Mammary epithelial cell (primary cell): ENCODE measurements at regions of chr4 and their contacts with region 1.

Region 1: GRCh38 chr4:46931981-46932380 is 22.9 kb upstream of the COX7B2 start:
- DNase-seq: peak; percentile 1
- H3K4me3 ChIP-seq: no peak overlapping the region
- H3K27ac ChIP-seq: no peak overlapping the region
- H3K4me1 ChIP-seq: no peaks in the 10 kb centered on the region
- H3K27me3 ChIP-seq: peaks cover 2% of the 10 kb centered on the region
- CTCF ChIP-seq: peak; percentile 26 to 66

Region 2: DNA sequence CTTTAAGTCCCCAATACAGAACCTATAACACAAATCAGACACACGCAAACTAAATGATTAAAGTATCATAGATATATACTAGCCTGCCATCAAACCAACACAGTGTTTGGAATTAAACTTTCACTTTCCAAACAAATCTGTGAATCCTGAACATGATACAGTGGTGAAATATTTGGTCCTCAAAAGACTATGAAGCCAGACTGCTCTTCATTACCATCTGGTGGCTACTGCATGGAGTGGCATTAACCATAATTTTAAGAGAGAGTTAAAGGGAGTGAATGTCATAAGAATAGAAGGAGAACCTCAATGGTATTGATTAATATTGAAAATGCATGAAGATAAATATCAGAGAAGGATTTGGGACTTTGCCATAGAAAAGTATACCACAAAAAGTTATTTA is 70.6 kb after region 1 on chr4:
- CTCF ChIA-PET with region 1: no interaction called
- dilution Hi-C with region 1: no loop called
- in situ Hi-C with region 1: no loop called
- intact Hi-C with region 1: loop called (anchors 2 kb)
- DNase-seq: peak; percentile 1
- H3K4me3 ChIP-seq: no peak overlapping the region
- H3K27ac ChIP-seq: no peak overlapping the region
- H3K4me1 ChIP-seq: no peaks in the 10 kb centered on the region
- H3K27me3 ChIP-seq: no peaks in the 10 kb centered on the region
- CTCF ChIP-seq: peak; percentile 22 to 50

Region 3: GRCh38 chr4:47032415-47033106 is 100.6 kb after region 1 on chr4:
- CTCF ChIA-PET with region 1: no interaction called
- dilution Hi-C with region 1: no loop called
- in situ Hi-C with region 1: no loop called
- intact Hi-C with region 1: loop called (anchors 1 kb)
- DNase-seq: peak; percentile 14
- H3K4me3 ChIP-seq: peak overlapping the region; percentile 23 to 53 (median 52)
- H3K27ac ChIP-seq: no peak overlapping the region
- H3K4me1 ChIP-seq: peaks cover 16% of the 10 kb centered on the region
- H3K27me3 ChIP-seq: peaks cover 4% of the 10 kb centered on the region
- CTCF ChIP-seq: peak; percentile 40 to 70

Region 4: GRCh38 chr4:47106561-47106960 is 174.6 kb after region 1 on chr4:
- CTCF ChIA-PET with region 1: no interaction called
- dilution Hi-C with region 1: no loop called
- in situ Hi-C with region 1: loop called in 1 of 2 experiments (anchors 10 kb)
- intact Hi-C with region 1: no loop called
- DNase-seq: no peak
- H3K4me3 ChIP-seq: no peak overlapping the region
- H3K27ac ChIP-seq: no peak overlapping the region
- H3K4me1 ChIP-seq: no peaks in the 10 kb centered on the region
- H3K27me3 ChIP-seq: no peaks in the 10 kb centered on the region
- CTCF ChIP-seq: no peak

Region 5: DNA sequence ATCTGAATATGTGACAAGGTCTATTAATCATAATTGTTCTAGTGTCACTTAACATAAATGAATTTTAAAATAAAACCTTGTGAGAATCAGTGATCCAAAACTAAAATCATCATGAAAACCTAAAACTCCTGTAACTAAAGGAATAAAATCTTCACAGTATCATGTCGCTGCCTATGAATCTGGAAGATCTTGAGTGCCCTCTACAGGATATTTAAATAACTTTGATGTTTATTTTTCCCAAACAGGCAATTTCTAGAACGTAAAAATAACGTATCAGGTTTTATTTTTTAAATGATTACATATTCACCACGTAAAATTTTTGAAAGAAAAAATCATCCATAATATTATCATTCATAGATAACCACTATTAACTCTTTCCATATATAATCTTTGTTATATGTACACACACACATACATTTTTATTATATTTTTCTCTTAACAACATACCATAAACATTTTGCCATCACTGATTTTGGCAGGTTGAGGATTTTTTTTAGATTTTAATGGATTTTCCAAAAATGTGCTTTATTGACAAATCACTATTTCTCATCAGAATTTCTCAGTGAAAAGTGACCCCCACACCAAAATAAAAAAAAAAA is 451.9 kb after region 1 on chr4:
- CTCF ChIA-PET with region 1: no interaction called
- dilution Hi-C with region 1: no loop called
- in situ Hi-C with region 1: loop called in 1 of 2 experiments (anchors 10 kb)
- intact Hi-C with region 1: loop called (anchors 1 kb)
- DNase-seq: peak; percentile 11
- H3K4me3 ChIP-seq: no peak overlapping the region
- H3K27ac ChIP-seq: no peak overlapping the region
- H3K4me1 ChIP-seq: no peaks in the 10 kb centered on the region
- H3K27me3 ChIP-seq: no peaks in the 10 kb centered on the region
- CTCF ChIP-seq: peak; percentile 32 to 55